ENCODE measurements at regions of chr12 and their contacts with region 1.

Region 1: GRCh38 chr12:123232807-123233543 is at the starts of genes MPHOSPH9 and MTRFR:
- DNase-seq: peak; percentile 98
- ATAC-seq: peak; percentile 86
- H3K4me3 Mint-ChIP-seq: peak within 1 kb of the TSS; percentile 100
- H3K27ac Mint-ChIP-seq: peak within 1 kb of the TSS; percentile 94
- H3K4me1 Mint-ChIP-seq: peaks cover 57% of the 10 kb centered on the region
- H3K27me3 Mint-ChIP-seq: no peaks in the 10 kb centered on the region
- total RNA-seq, gene MPHOSPH9: 121 to 131 TPM
- total RNA-seq, gene MTRFR: 41.2 to 42.1 TPM

Region 2: DNA sequence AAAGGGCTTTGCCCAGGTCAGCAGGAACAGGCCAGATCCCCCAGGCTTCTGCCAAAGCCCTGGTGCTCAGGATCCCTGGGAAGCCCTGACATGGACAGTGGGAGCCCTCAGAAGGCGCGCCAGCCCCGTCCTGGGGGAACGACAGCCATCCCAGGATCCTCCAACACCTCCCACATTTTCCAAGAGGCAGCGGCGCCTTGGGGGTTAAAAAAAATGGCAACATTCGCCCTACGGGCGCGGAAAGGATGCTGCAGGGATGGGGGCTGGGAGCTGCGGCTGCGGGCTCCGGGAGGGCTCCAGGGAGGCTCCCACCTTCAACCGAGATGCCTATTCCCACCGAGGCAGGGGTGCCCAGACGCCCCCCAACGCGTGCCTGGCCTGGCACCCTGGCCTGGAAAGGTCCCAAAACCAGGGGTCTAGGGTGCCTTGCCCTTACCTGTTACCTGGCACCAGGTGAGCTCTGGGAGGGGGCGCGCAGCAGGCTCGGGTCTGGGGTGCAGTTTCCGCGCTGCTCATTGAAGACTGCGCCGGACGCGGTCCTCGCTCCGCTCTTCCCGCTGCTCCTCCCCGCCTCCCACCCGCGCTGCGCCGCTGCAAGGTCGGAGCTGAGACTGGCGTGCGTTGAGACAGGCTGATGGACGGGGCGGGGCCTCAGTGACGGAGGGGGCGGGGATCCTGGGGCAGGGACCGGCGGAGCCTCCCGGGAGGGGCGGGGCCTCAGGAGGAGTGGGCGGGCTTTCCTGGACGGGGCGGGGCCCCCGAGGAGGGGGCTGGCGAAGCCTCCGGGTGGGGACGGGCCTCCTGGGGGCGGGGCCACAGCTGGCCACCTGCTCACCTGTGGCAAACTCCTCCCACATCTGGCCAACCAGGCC is 266.9 kb before region 1 on chr12 and contains the start of gene ABCB9:
- POLR2A ChIA-PET with region 1: interaction called, 17 read pairs
- DNase-seq: peak; percentile 94
- ATAC-seq: peak; percentile 97
- H3K4me3 Mint-ChIP-seq: peak within 1 kb of the TSS; percentile 67
- H3K27ac Mint-ChIP-seq: no peak within 1 kb of the TSS
- H3K4me1 Mint-ChIP-seq: peaks cover 9% of the 10 kb centered on the region
- H3K27me3 Mint-ChIP-seq: no peaks in the 10 kb centered on the region
- total RNA-seq, gene ABCB9: 7.0 to 9.2 TPM

Region 3: DNA sequence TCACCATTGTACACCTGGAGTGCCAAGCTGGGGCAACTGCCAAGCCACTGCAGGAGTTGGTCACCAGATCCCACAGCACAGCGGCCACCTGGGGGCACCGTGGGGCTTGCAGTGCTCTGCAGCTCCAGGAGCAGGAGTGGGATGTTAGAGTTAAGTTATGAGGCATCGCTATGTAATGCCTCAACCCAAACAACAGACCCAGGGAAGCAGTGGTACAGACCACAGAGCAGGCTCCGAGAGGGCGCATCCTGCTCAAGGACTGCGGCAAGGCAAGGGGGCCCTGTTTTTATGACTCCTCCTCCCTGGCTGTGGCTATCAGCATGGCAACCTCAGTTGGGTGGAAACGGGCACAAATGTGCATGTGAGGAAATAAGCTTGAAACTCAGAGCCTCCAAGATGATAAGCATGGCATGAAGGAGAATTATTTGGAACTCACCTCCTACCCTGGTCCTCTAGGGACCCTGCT is 189.4 kb before region 1 on chr12:
- POLR2A ChIA-PET with region 1: interaction called, 16 read pairs
- DNase-seq: peak; percentile 75
- ATAC-seq: peak; percentile 97
- H3K4me3 Mint-ChIP-seq: peak overlapping the region; percentile 50
- H3K27ac Mint-ChIP-seq: peak overlapping the region; percentile 78
- H3K4me1 Mint-ChIP-seq: peaks cover 30% of the 10 kb centered on the region
- H3K27me3 Mint-ChIP-seq: no peaks in the 10 kb centered on the region

Region 4: GRCh38 chr12:123150744-123151456 is 82.1 kb before region 1 on chr12 and contains the start of gene PITPNM2:
- POLR2A ChIA-PET with region 1: interaction called, 14 read pairs
- DNase-seq: peak; percentile 83
- ATAC-seq: peak; percentile 89
- H3K4me3 Mint-ChIP-seq: peak within 1 kb of the TSS; percentile 87
- H3K27ac Mint-ChIP-seq: peak within 1 kb of the TSS; percentile 80
- H3K4me1 Mint-ChIP-seq: peaks cover 30% of the 10 kb centered on the region
- H3K27me3 Mint-ChIP-seq: peaks cover 3% of the 10 kb centered on the region
- total RNA-seq, gene PITPNM2: 15.2 to 18.1 TPM

Region 5: GRCh38 chr12:123271001-123271729 is 38.2 kb after region 1 on chr12:
- POLR2A ChIA-PET with region 1: interaction called, 29 read pairs
- DNase-seq: peak; percentile 86
- ATAC-seq: peak; percentile 64
- H3K4me3 Mint-ChIP-seq: no peak overlapping the region
- H3K27ac Mint-ChIP-seq: no peak overlapping the region
- H3K4me1 Mint-ChIP-seq: peaks cover 23% of the 10 kb centered on the region
- H3K27me3 Mint-ChIP-seq: no peaks in the 10 kb centered on the region

Region 6: GRCh38 chr12:123601602-123602489 is 368.9 kb after region 1 on chr12 and contains the start of gene DDX55:
- POLR2A ChIA-PET with region 1: interaction called, 17 read pairs
- DNase-seq: peak; percentile 89
- ATAC-seq: peak; percentile 90
- H3K4me3 Mint-ChIP-seq: peak within 1 kb of the TSS; percentile 93
- H3K27ac Mint-ChIP-seq: peak within 1 kb of the TSS; percentile 99
- H3K4me1 Mint-ChIP-seq: peaks cover 33% of the 10 kb centered on the region
- H3K27me3 Mint-ChIP-seq: no peaks in the 10 kb centered on the region
- total RNA-seq, gene DDX55: 34.5 to 39.3 TPM

Measured in activated naive CD8-positive, alpha-beta T cell treated with anti-CD3 and anti-CD28 coated beads, Interleukin-2, amount 10 ng/mL, durations not matched to agents 7 days and 5 days (primary cell).